ENCODE measurements at regions of chr19 and their contacts with region 1.

Region 1: GRCh38 chr19:3434712-3435553 is 45.4 kb downstream of the SMIM24 start:
- DNase-seq: peak; percentile 96
- H3K4me3 ChIP-seq: peak overlapping the region; percentile 64 to 65
- H3K27ac ChIP-seq: peak overlapping the region; percentile 76 to 90
- H3K4me1 ChIP-seq: peaks cover 25% of the 10 kb centered on the region
- H3K27me3 ChIP-seq: no peaks in the 10 kb centered on the region
- CTCF ChIP-seq: peak in 1 of 3 experiments; percentile 11
- POLR2A ChIP-seq: no peak

Region 2: DNA sequence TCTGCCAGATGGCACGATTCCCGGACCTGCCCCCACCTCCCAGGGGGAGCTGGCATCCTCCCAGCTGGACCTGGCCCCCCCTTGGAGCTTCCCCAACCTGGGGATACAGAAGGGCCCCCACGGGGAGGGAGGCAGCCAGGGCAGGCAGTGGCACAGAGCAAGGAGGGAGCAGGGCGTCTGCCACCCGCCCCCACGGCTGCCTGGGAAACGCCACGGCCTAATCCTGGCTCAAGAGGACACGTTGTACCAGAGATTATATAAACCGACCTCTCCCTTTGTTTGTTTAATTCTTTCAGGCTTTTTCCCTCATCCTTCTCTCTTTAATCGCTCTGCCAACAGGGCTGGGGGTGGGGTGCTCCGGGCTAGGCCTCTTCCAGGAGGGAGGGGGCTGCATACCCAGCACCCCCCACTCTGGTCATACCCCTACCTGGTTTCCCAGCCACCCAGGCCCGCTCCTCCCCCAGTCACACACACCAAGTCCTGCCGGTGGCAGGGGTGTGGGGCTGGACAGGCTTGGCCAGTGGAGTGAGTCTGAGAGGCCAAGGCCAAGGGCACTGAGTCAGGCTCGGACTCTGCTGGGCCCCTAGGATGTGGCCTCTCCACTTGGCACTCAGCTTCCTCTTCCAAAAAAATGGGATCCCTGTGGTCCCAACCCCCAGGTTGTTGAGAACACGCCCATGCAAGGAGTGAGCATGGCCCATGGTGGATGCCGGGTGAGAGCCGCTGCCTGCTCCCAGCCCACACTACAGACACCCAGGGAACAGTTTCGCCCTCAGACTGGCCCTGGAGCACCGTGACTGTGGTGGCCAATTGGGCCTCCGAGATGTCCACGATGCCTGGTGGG is 98.0 kb before region 1 on chr19:
- intact Hi-C with region 1: loop called (anchors 10 kb)
- DNase-seq: peak; percentile 95
- H3K4me3 ChIP-seq: no peak overlapping the region
- H3K27ac ChIP-seq: peak overlapping the region; percentile 77 to 86
- H3K4me1 ChIP-seq: peaks cover 38% of the 10 kb centered on the region
- H3K27me3 ChIP-seq: no peaks in the 10 kb centered on the region
- CTCF ChIP-seq: no peak
- POLR2A ChIP-seq: no peak

Region 3: DNA sequence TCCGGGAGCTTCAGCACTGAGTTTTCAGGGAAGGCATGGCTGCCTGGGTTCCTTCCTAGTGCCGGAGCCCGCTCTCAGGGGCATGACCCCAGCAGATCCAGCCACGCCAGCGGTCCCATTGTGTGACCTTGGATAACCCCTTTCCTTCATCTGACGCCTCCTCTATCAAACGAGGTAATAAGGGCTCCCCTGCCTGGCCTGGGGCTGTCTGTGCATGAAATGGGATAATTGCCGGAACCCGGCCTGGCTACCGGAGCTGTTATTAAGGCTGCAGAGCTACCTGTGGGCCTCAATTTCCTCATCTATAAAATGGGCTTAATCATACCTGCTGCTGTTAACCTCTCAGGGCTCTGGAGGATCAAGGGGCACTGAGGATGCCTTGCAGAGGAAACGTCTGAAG is 86.9 kb before region 1 on chr19:
- intact Hi-C with region 1: no loop called
- DNase-seq: no peak
- H3K4me3 ChIP-seq: no peak overlapping the region
- H3K27ac ChIP-seq: no peak overlapping the region
- H3K4me1 ChIP-seq: peaks cover 22% of the 10 kb centered on the region
- H3K27me3 ChIP-seq: no peaks in the 10 kb centered on the region
- CTCF ChIP-seq: no peak
- POLR2A ChIP-seq: no peak

Measured in testis (tissue), 5 donors.